ENCODE measurements at regions of chr12 and their contacts with region 1.

Region 1: GRCh38 chr12:50302686-50303085 is 19.4 kb upstream of the LIMA1 start:
- DNase-seq: no peak
- H3K4me3 ChIP-seq: no peak overlapping the region
- H3K27ac ChIP-seq: no peak overlapping the region
- H3K4me1 ChIP-seq: peaks cover 24% of the 10 kb centered on the region
- H3K27me3 ChIP-seq: no peaks in the 10 kb centered on the region
- CTCF ChIP-seq: no peak

Region 2: GRCh38 chr12:50326636-50327284 is 24.1 kb after region 1 on chr12:
- CTCF ChIA-PET with region 1: no interaction called
- POLR2A ChIA-PET with region 1: interaction called, 14 read pairs
- intact Hi-C with region 1: no loop called
- DNase-seq: peak in 1 of 2 experiments; percentile 74
- H3K4me3 ChIP-seq: peak overlapping the region; percentile 6; the same call in 1 of the 2 replicates
- H3K27ac ChIP-seq: peak overlapping the region; percentile 30
- H3K4me1 ChIP-seq: peaks cover 34% of the 10 kb centered on the region
- H3K27me3 ChIP-seq: no peaks in the 10 kb centered on the region
- CTCF ChIP-seq: no peak